Activated CD8-positive, alpha-beta T cell treated with anti-CD3 and anti-CD28 coated beads, Interleukin-2, amount 10 ng/mL, durations not matched to agents 7 days and 5 days (primary cell): ENCODE measurements at regions of chr19 and their contacts with region 1.

Region 1: DNA sequence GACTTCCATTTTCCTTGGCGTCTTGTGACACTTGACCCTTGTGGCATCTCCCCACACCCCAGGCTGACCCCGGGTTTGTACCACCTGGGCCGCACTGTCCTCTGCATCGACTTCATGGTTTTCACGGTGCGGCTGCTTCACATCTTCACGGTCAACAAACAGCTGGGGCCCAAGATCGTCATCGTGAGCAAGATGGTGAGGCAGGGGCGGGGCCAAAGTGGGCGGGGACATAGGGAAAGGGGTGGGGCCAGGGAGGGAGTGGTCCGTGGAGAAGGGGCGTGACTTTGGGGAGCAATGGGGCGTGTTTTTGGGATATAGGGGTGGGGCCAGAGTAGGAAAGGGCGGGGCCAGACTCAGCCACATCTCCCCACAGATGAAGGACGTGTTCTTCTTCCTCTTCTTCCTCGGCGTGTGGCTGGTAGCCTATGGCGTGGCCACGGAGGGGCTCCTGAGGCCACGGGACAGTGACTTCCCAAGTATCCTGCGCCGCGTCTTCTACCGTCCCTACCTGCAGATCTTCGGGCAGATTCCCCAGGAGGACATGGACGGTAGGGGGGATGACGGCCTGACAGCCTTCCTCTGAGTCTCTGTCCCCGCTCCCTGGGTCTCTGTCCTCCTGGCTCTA is 42.8 kb downstream of the TRPM4 start:
- DNase-seq: peak; percentile 23
- ATAC-seq: peak; percentile 62
- H3K4me3 Mint-ChIP-seq: no peak overlapping the region
- H3K27ac Mint-ChIP-seq: no peak overlapping the region
- H3K4me1 Mint-ChIP-seq: peaks cover 8% of the 10 kb centered on the region
- H3K27me3 Mint-ChIP-seq: no peaks in the 10 kb centered on the region

Region 2: GRCh38 chr19:49113762-49114629 is 86.4 kb before region 1 on chr19 and contains the start of gene LIN7B:
- CTCF ChIA-PET with region 1: interaction called, 18 read pairs
- POLR2A ChIA-PET with region 1: interaction called, 3 read pairs
- DNase-seq: peak; percentile 76
- ATAC-seq: peak; percentile 77
- H3K4me3 Mint-ChIP-seq: peak within 1 kb of the TSS; percentile 80
- H3K27ac Mint-ChIP-seq: peak within 1 kb of the TSS; percentile 75
- H3K4me1 Mint-ChIP-seq: peaks cover 32% of the 10 kb centered on the region
- H3K27me3 Mint-ChIP-seq: no peaks in the 10 kb centered on the region
- total RNA-seq, gene LIN7B: 3.7 to 6.3 TPM

Region 3: DNA sequence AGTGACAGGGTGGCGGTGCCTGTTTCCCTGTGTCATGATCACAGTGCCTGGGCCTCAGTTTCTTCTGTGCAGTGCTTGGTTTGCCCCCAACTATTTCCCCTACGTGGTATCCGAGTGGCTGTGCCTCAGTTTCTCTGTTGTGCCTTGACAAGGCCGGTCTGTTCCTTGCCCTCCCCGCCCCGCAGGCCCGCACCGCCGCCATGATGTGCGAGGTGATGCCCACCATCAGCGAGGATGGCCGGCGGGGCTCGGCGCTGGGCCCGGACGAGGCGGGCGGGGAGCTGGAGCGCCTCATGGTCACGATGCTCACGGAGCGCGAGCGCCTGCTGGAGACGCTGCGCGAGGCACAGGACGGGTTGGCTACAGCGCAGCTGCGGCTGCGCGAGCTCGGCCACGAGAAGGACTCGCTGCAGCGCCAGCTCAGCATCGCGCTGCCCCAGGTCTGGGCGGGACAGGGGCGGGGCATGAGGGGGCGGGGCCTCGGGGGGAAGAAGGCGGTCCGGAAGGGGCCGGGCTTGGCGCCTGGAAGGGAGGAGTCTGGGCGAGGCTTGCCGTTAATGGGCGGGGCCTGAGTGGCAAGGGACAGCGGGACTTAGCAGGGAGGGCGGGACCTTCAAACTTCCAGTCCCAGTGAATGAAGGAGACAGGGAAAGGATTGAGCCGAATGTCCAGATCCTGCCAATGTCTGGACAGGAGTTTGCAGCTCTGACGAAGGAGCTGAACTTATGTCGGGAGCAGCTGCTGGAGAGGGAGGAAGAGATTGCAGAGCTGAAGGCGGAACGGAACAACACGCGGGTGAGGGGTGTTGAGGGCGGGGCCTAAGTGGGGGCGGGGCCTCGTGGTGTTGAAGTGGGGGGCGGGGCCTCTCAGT is 72.4 kb before region 1 on chr19:
- CTCF ChIA-PET with region 1: interaction called, 10 read pairs
- POLR2A ChIA-PET with region 1: no interaction called
- DNase-seq: peak; percentile 95
- ATAC-seq: peak; percentile 97
- H3K4me3 Mint-ChIP-seq: peak overlapping the region; percentile 83
- H3K27ac Mint-ChIP-seq: peak overlapping the region; percentile 87
- H3K4me1 Mint-ChIP-seq: peaks cover 15% of the 10 kb centered on the region
- H3K27me3 Mint-ChIP-seq: peaks cover 3% of the 10 kb centered on the region

Region 4: DNA sequence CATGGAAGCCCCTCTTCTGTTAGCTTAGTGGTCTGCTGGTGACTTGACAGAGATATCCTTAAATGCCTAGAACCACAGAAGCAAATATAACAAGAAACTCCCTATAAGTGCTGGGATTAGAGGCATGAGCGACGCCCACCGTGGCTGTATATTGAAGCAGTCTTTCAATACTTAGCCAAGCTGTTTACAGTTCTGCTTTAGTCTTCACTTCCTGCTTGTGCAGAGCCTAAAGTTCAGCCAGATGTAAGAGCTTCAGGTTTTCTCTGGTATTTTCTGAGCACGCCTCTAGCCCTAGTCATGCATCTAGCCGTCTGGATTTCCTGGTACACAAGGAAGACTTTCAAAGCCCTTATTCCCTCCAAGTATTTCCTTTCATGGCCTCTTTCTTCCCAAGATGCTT is 14.2 kb before region 1 on chr19:
- CTCF ChIA-PET with region 1: interaction called, 19 read pairs
- POLR2A ChIA-PET with region 1: no interaction called
- DNase-seq: no peak
- ATAC-seq: no peak
- H3K4me3 Mint-ChIP-seq: no peak overlapping the region
- H3K27ac Mint-ChIP-seq: no peak overlapping the region
- H3K4me1 Mint-ChIP-seq: peaks cover 19% of the 10 kb centered on the region
- H3K27me3 Mint-ChIP-seq: peaks cover 5% of the 10 kb centered on the region